ENCODE measurements at regions of chr19 and their contacts with region 1.

Region 1: GRCh38 chr19:10416380-10417257 is 3.7 kb upstream of the PDE4A start:
- DNase-seq: peak; percentile 99
- ATAC-seq: peak; percentile 70
- H3K4me3 ChIP-seq: peak overlapping the region; percentile 15 to 69 (median 49)
- H3K4me3 Mint-ChIP-seq: peak overlapping the region; percentile 85
- H3K27ac ChIP-seq: peak overlapping the region in 1 of 2 donors; percentile 28
- H3K27ac Mint-ChIP-seq: peak overlapping the region; percentile 94
- H3K4me1 ChIP-seq: peaks cover 66 to 82% of the 10 kb centered on the region in 2 donors
- H3K4me1 Mint-ChIP-seq: peaks cover 59% of the 10 kb centered on the region
- H3K27me3 ChIP-seq: peaks cover 0 to 46% (median 28%) of the 10 kb centered on the region in 4 experiments
- H3K27me3 Mint-ChIP-seq: peaks cover 29% of the 10 kb centered on the region
- CTCF ChIP-seq: peak; percentile 100

Region 2: DNA sequence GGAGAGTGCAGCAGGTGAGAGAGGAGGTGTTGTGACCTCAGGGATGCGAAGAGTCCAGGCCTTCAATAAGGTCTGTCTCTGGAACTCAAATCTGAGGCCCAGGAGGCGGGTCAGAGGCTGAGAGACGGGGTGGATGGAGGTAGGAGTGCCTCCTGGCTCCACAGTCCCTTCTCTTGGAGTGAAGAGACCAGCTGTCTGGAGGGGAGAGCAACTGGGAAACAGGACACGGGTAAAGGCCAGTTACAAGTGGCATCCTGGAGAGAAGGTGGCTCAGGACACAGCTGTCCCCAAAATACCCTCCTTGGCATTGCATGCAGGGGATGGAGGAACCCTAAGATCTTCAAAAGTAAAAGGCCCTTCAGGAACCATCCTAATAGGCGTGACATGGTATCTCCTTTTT is 23.0 kb after region 1 on chr19:
- CTCF ChIA-PET with region 1: interaction called, 45 read pairs
- POLR2A ChIA-PET with region 1: no interaction called
- intact Hi-C with region 1: loop called (anchors 1 kb)
- DNase-seq: no peak
- ATAC-seq: no peak
- H3K4me3 ChIP-seq: no peak overlapping the region
- H3K4me3 Mint-ChIP-seq: no peak overlapping the region
- H3K27ac ChIP-seq: no peak overlapping the region
- H3K27ac Mint-ChIP-seq: no peak overlapping the region
- H3K4me1 ChIP-seq: no peaks in the 10 kb centered on the region
- H3K4me1 Mint-ChIP-seq: peaks cover 6% of the 10 kb centered on the region
- H3K27me3 ChIP-seq: no peaks in the 10 kb centered on the region
- H3K27me3 Mint-ChIP-seq: no peaks in the 10 kb centered on the region
- CTCF ChIP-seq: no peak

Region 3: DNA sequence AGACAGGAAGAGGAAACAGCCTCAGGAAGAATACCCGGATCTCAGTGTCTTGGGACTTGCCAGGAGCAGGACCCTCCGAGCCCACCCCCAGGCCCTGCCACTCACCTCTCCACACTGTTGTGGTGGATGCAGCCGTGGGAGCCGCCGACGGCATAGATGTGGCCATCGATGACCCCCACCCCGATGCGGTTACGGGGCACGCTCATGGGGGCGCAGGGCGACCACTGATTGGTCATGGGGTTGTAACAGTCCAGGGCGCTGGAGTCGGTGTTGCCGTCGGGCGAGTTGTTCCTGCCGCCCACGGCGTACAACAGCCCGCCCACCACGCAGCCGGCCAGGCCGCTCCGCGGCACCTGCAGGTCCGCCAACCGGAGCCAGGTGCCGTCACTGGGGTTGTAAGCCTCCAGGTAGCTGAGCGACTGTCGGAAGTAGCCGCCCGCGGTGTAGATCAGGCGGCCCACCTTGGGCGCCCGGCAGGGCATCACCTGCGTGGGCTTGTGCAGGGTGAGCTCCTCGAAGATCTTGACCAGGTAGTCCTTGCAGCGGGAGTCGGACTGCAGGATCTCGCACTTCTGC is 74.9 kb after region 1 on chr19:
- CTCF ChIA-PET with region 1: no interaction called
- POLR2A ChIA-PET with region 1: no interaction called
- intact Hi-C with region 1: no loop called
- DNase-seq: no peak
- ATAC-seq: no peak
- H3K4me3 ChIP-seq: no peak overlapping the region
- H3K4me3 Mint-ChIP-seq: no peak overlapping the region
- H3K27ac ChIP-seq: no peak overlapping the region
- H3K27ac Mint-ChIP-seq: no peak overlapping the region
- H3K4me1 ChIP-seq: no peaks in the 10 kb centered on the region
- H3K4me1 Mint-ChIP-seq: peaks cover 3% of the 10 kb centered on the region
- H3K27me3 ChIP-seq: no peaks in the 10 kb centered on the region
- H3K27me3 Mint-ChIP-seq: no peaks in the 10 kb centered on the region
- CTCF ChIP-seq: no peak